IMR-90 (cell line): ENCODE measurements at regions of chr16 and their contacts with region 1.

Region 1: GRCh38 chr16:2350500-2350899 is 10.0 kb upstream of the ABCA3 start:
- DNase-seq: peak; percentile 31
- ATAC-seq: no peak
- H3K4me3 ChIP-seq: no peak overlapping the region
- H3K27ac ChIP-seq: no peak overlapping the region
- H3K4me1 ChIP-seq: no peaks in the 10 kb centered on the region
- H3K27me3 ChIP-seq: peaks cover 12% of the 10 kb centered on the region
- CTCF ChIP-seq: no peak
- POLR2A ChIP-seq: no peak
- RAD21 ChIP-seq: no peak

Region 2: GRCh38 chr16:2384426-2384825 is 33.9 kb after region 1 on chr16:
- CTCF ChIA-PET with region 1: no interaction called
- POLR2A ChIA-PET with region 1: no interaction called
- dilution Hi-C with region 1: no loop called
- in situ Hi-C with region 1: no loop called
- intact Hi-C with region 1: no loop called
- DNase-seq: no peak
- ATAC-seq: no peak
- H3K4me3 ChIP-seq: no peak overlapping the region
- H3K27ac ChIP-seq: no peak overlapping the region
- H3K4me1 ChIP-seq: 0 out of 2 replicates have a peak, but pooled peaks cover 3% of the 10 kb centered on the region
- H3K27me3 ChIP-seq: peaks cover 12% of the 10 kb centered on the region
- CTCF ChIP-seq: no peak
- POLR2A ChIP-seq: no peak
- RAD21 ChIP-seq: no peak

Region 3: DNA sequence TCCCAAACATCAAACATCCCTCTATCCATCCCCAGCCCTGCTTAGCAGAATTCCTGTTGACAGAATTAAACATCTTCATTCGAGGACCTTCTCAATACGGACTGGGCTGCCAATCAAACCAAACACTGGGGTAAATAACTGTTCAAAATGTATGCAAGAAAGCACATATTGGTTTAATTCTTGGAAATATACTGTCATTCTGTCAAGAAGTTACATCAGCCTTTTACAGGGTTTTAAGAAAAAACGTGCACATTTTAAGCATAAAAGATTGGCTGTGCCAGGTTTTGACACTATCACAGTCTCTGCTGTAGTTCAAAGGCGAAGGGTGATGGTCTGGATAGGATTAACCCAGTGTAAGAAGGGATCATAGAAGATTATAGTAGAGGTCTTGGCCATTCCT is 53.6 kb after region 1 on chr16:
- CTCF ChIA-PET with region 1: no interaction called
- POLR2A ChIA-PET with region 1: no interaction called
- dilution Hi-C with region 1: no loop called
- in situ Hi-C with region 1: loop called (anchors 10 kb)
- intact Hi-C with region 1: no loop called
- DNase-seq: no peak
- ATAC-seq: no peak
- H3K4me3 ChIP-seq: no peak overlapping the region
- H3K27ac ChIP-seq: no peak overlapping the region
- H3K4me1 ChIP-seq: no peaks in the 10 kb centered on the region
- H3K27me3 ChIP-seq: peaks cover 10% of the 10 kb centered on the region
- CTCF ChIP-seq: no peak
- POLR2A ChIP-seq: no peak
- RAD21 ChIP-seq: no peak